AG04449 (cell line): ENCODE measurements at regions of chr4 and their contacts with region 1.

Region 1: GRCh38 chr4:6546681-6547447 is 28.1 kb upstream of the MAN2B2 start:
- DNase-seq: peak; percentile 12
- H3K4me3 ChIP-seq: no peak overlapping the region
- CTCF ChIP-seq: peak; percentile 91

Region 2: DNA sequence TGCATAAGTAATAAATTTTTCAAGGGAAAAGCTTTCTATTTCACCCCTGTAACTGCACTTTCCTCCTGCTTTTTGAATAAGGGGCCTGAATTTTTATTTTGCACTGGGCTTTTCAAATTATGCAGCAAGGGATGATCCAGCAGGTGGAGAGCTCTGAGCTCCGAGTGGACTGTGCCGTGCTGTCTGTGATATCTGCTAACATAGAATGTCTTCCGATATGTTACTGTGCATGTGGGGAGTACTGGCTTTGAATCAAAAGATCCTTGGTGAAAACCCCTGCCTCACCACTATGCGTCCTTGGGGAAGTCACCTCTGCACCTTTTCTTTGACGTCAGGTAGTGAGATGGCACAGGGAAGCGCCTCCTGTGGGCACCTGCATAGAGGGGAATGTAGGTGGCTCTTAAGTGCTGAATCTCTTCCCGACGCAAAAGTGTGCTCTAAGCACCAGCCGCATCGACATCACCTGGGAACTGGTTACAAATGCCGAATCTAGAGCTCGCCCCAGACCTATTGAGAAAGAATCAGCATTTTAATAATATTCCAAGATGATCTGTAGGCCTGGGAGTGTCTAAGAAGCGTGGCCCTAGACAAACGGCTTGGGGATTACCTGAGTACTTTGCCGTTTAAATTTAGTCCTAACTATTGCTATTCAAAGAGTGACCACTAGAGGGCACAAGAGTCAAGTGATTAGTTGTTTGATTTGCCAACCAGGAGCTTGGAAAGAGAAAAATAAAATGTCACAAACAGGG is 296.5 kb before region 1 on chr4:
- CTCF ChIA-PET with region 1: interaction called, 46 read pairs
- POLR2A ChIA-PET with region 1: no interaction called
- DNase-seq: no peak
- H3K4me3 ChIP-seq: no peak overlapping the region
- CTCF ChIP-seq: peak; percentile 51

Region 3: DNA sequence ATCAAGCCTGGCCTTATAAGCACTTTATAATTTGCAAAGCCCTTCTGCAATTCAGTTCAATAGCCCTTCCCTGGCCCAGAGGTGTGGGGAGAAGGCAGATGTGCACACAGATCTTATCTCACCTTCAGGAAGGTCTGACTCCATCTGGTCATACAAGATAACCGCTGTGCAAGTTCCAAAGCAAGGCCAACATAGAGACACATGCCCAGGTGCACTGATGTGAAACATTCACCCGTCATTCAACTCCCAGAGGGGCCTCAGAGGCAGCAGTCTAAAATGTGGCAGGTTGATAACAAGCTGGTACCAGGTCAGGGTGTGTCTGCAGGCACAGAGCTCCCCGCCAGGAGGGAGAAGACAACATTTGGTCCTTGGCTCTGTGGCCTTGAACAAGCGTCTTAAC is 288.1 kb before region 1 on chr4:
- CTCF ChIA-PET with region 1: interaction called, 10 read pairs
- POLR2A ChIA-PET with region 1: no interaction called
- DNase-seq: no peak
- H3K4me3 ChIP-seq: no peak overlapping the region
- CTCF ChIP-seq: no peak

Region 4: GRCh38 chr4:6282314-6282771 is 264.5 kb before region 1 on chr4:
- CTCF ChIA-PET with region 1: no interaction called
- POLR2A ChIA-PET with region 1: no interaction called
- DNase-seq: no peak
- H3K4me3 ChIP-seq: no peak overlapping the region
- CTCF ChIP-seq: no peak

Region 5: DNA sequence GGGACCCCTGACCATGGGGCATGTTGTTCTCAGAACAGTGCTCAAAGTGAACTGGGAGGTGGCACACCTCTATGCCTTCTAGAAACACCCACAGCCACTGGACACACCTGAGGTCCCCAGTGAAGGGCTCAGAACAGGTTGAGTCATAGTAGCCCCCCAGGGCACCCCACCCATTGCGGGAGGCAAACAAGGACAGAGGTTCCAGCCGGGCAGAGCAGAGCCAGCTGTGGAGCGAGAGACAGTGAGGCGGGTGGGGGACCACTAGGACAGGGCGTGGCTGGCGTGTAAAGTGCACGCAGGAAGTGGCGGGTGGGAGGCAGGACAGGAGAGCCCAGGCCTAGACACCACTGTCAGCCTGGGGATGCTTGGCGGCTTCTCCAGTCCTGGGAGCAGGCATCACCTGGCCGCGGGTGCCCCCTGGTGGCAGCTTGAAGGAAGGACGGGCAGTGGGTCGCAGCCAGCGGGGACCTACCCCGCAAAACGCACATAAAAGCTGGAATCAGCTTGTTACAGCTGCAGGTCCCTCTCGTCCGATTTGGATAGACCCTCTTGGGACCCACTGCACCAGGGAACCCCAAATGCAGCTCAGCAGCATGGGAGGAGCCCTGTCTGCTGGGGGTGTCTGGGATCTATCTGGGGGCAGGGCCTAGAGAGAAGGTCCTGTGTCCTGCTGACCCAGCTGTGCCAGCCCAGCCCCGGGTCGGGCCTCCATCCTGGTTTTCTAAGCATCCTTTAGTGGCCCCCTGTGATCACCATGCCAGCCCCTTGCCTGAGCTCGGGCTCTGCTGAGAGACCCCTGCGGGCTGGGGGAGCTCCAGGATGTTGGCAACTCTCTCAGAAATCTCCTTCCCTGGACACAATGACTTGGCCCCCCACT is 219.6 kb before region 1 on chr4:
- CTCF ChIA-PET with region 1: interaction called, 35 read pairs
- POLR2A ChIA-PET with region 1: no interaction called
- DNase-seq: no peak
- H3K4me3 ChIP-seq: no peak overlapping the region
- CTCF ChIP-seq: peak; percentile 95

Region 6: DNA sequence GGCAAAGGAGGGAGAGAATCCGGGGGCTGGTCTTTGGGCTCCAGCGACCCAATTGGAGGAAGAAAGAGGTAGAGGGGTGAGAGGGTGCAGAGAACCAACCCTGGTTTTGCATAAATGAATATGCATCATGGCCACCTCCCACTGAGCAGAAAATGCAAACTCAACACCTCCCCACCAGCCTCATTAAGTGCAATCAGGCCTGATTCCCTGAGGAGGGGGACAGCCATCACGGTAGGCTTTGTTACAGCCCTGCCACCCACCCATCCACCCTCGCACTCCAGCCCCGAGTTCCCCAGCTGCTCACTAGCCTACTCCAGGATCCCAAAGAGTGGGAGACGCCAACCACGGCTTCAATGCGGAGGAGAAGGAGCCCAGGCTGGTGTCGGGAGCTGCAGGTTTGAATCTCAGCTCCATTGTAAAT is 20.2 kb before region 1 on chr4:
- CTCF ChIA-PET with region 1: interaction called, 17 read pairs
- POLR2A ChIA-PET with region 1: no interaction called
- DNase-seq: no peak
- H3K4me3 ChIP-seq: no peak overlapping the region
- CTCF ChIP-seq: no peak

Region 7: GRCh38 chr4:6562931-6563901 is 16.4 kb after region 1 on chr4:
- CTCF ChIA-PET with region 1: interaction called, 112 read pairs
- POLR2A ChIA-PET with region 1: no interaction called
- DNase-seq: no peak
- H3K4me3 ChIP-seq: peak overlapping the region; percentile 18
- CTCF ChIP-seq: no peak